ENCODE measurements at regions of chr16 and their contacts with region 1.

Region 1: GRCh38 chr16:67406111-67406890 is 10.0 kb downstream of the ZDHHC1 start:
- DNase-seq: peak in 1 of 3 donors; percentile 8
- H3K4me3 ChIP-seq: no peak overlapping the region
- H3K4me3 Mint-ChIP-seq: no peak overlapping the region
- H3K27ac ChIP-seq: no peak overlapping the region
- H3K27ac Mint-ChIP-seq: no peak overlapping the region
- H3K4me1 ChIP-seq: peaks cover 10 to 12% of the 10 kb centered on the region in 2 donors
- H3K4me1 Mint-ChIP-seq: peaks cover 12% of the 10 kb centered on the region
- H3K27me3 ChIP-seq: no peaks in the 10 kb centered on the region
- H3K27me3 Mint-ChIP-seq: peaks cover 0 to 9% (median 7%) of the 10 kb centered on the region in 3 donors
- CTCF ChIP-seq: no peak

Region 2: GRCh38 chr16:67326472-67327309 is 79.6 kb before region 1 on chr16 and contains the starts of genes KCTD19 and LRRC36:
- intact Hi-C with region 1: no loop called
- DNase-seq: peak; percentile 21 to 43 (median 26)
- H3K4me3 ChIP-seq: peak within 1 kb of the TSS in 2 of 3 experiments; percentile 27 to 58
- H3K4me3 Mint-ChIP-seq: peak within 1 kb of the TSS; percentile 75 to 94
- H3K27ac ChIP-seq: no peak within 1 kb of the TSS
- H3K27ac Mint-ChIP-seq: peak within 1 kb of the TSS in 2 of 7 donors; percentile 2 to 83
- H3K4me1 ChIP-seq: peaks cover 26 to 32% of the 10 kb centered on the region in 2 donors
- H3K4me1 Mint-ChIP-seq: peaks cover 29% of the 10 kb centered on the region
- H3K27me3 ChIP-seq: peaks cover 0 to 9% of the 10 kb centered on the region in 2 donors
- H3K27me3 Mint-ChIP-seq: peaks cover 20 to 23% (median 22%) of the 10 kb centered on the region in 3 donors
- CTCF ChIP-seq: peak; percentile 72
- polyA plus RNA-seq, gene KCTD19: not detected
- polyA plus RNA-seq, gene LRRC36: 0.65 to 3.2 (median 1.8) TPM

Region 3: DNA sequence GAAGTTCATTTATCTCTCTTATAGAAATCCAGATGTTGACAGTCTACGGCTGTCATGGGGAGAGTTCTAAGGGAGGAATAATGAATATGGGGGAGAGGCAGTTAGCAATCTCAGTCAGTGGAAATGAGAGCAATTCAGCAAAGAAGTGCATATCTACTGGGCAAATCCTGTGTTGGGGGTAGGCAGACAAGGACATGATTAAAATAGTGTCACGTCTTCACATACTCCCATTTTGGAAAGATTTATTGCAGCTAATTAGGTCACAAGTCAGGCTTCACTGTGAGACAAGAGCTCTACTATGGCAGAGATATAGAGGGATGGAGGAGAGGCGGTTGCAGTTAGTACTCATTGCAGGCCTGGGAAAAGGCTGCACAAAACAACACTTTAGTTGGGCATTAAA is 49.9 kb before region 1 on chr16:
- intact Hi-C with region 1: loop called in 1 of 2 experiments (anchors 10 kb)
- DNase-seq: no peak
- H3K4me3 ChIP-seq: no peak overlapping the region
- H3K4me3 Mint-ChIP-seq: no peak overlapping the region
- H3K27ac ChIP-seq: no peak overlapping the region
- H3K27ac Mint-ChIP-seq: no peak overlapping the region
- H3K4me1 ChIP-seq: no peaks in the 10 kb centered on the region
- H3K4me1 Mint-ChIP-seq: peaks cover 4% of the 10 kb centered on the region
- H3K27me3 ChIP-seq: no peaks in the 10 kb centered on the region
- H3K27me3 Mint-ChIP-seq: peaks cover 2 to 3% (median 3%) of the 10 kb centered on the region in 3 donors
- CTCF ChIP-seq: no peak

Measured in CD14-positive monocyte (primary cell).